Adrenal gland (tissue), 19 donors: ENCODE measurements at regions of chr5 and their contacts with region 1.

Region 1: DNA sequence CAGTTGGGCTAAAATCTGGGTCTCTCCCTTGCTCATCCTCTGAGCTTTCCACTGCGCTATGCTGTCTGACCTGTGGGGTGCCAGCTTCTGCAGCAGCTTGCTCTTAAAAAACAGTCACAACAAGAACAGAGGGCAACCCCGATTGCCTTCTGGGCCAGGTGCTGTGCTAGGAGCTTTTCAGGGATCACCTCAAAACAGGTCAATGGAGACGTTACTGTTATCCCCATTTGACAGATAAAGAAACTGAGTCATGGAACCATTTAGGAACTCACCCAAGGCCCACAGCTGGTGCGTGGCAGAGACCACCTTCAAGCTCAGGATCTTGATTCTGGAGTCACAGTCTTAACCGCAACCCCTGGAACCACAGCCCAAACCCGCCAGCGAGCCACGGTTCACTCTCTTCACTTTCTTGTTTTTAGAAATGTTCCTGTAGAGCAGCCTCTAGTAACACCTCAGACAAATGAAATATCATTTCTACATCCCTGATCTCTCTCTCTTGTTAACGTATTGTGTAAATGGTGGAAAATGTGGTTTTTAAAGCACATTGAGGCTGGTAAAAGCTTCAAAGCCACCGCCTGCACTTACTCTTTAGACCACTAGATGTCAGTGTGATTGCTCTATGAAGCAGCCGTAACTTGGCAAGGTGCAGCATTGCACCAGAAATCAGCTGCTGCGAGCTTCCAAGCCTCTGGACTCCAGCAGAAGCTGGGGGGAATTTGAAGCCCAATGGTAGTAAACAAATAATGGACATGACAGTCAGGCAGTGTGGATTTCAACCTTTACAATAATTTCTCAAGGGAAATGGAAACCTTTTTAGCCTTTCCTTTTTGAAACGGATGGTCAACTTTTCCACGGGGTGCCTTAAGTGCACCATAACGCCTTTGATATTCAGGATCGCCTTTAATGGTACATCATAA is 1.7 kb downstream of the FYB1 start:
- DNase-seq: peak; percentile 72 to 90 (median 81)
- H3K4me3 ChIP-seq: no peak overlapping the region
- H3K27ac ChIP-seq: no peak overlapping the region
- H3K4me1 ChIP-seq: peaks cover 0 to 8% of the 10 kb centered on the region in 2 donors
- H3K27me3 ChIP-seq: no peaks in the 10 kb centered on the region
- CTCF ChIP-seq: peak; percentile 88 to 98 (median 95)
- POLR2A ChIP-seq: no peak

Region 2: DNA sequence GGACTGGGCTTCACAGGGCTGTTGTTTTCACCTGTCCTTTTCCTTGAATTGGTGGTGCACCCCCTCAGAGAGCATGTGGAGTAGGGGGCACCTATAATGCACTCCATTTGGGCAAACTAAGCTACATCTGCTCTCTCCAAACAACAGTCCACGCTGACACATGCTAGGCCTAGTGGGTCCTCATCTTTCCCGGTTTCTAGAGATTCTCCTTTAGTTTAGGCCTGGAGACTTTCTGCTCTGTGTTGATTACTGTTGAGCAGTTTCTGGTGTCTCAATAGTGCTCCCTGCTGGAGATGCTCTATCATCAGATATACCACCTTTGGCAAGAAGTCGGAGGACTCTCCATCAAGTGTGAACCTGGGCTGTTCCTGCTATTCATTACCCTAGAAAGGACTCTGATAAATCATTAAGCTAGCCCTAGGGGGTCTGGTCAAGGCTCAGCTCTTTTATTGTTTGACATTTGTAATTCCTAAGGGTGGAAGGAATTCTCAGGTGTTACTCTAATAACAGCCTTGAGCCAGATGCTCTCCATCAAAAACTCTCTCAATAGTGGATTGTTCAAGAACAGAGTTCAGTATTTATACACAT is 65.7 kb after region 1 on chr5:
- intact Hi-C with region 1: loop called in 1 of 2 experiments (anchors 10 kb)
- DNase-seq: peak in 6 of 7 donors; percentile 36 to 57 (median 44)
- H3K4me3 ChIP-seq: no peak overlapping the region
- H3K27ac ChIP-seq: no peak overlapping the region
- H3K4me1 ChIP-seq: no peaks in the 10 kb centered on the region
- H3K27me3 ChIP-seq: peaks cover 5% of the 10 kb centered on the region
- CTCF ChIP-seq: peak; percentile 37 to 65 (median 62)
- POLR2A ChIP-seq: no peak

Region 3: DNA sequence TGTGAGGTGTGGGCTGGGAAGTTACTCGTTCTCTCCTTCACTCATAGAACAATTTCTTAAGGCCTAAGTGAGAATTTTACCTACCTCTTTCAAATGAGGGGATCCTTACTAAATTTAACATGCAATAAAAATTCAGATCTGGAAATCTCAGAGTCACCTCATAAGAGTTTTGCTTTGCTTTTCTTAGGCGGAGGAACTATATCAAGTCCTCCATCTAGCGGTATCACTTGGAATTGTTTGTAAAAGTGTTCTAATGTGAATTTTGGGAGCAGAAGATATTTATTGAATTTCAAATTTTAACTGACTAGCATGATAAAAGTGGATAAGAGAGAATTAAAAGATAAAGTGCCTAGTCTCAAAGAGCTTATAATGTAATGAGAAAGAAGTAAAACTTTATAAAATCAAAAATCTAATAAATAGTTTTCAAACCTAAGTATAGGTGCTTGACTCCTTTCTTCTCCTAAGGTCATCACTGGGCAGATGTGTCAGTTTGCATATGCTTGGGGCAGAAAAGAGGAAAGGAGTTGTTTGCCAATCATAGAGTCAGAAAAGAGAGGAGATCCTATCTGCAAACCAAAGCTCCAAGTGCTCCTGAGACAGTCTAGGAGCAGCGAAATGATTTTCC is 352.9 kb after region 1 on chr5:
- intact Hi-C with region 1: loop called (anchors 5 kb)
- DNase-seq: no peak
- H3K4me3 ChIP-seq: no peak overlapping the region
- H3K27ac ChIP-seq: no peak overlapping the region
- H3K4me1 ChIP-seq: no peaks in the 10 kb centered on the region
- H3K27me3 ChIP-seq: no peaks in the 10 kb centered on the region
- CTCF ChIP-seq: peak; percentile 68 to 83 (median 74)
- POLR2A ChIP-seq: no peak